ENCODE measurements at regions of chr4 and their contacts with region 1.

Region 1: GRCh38 chr4:185471235-185472102 is at the start of gene CCDC110:
- DNase-seq: peak; percentile 86 to 98 (median 92)
- ATAC-seq: peak; percentile 92
- H3K4me3 ChIP-seq: peak within 1 kb of the TSS; percentile 73
- H3K4me3 Mint-ChIP-seq: peak within 1 kb of the TSS; percentile 93
- H3K27ac ChIP-seq: peak within 1 kb of the TSS in 1 of 2 donors; percentile 31
- H3K27ac Mint-ChIP-seq: peak within 1 kb of the TSS; percentile 63
- H3K4me1 ChIP-seq: peaks cover 20% of the 10 kb centered on the region
- H3K4me1 Mint-ChIP-seq: peaks cover 18% of the 10 kb centered on the region
- H3K27me3 ChIP-seq: peaks cover 0 to 10% of the 10 kb centered on the region in 2 experiments
- H3K27me3 Mint-ChIP-seq: peaks cover 5% of the 10 kb centered on the region
- CTCF ChIP-seq: peak; percentile 48
- total RNA-seq, gene CCDC110: 0.34 to 0.36 TPM

Region 2: DNA sequence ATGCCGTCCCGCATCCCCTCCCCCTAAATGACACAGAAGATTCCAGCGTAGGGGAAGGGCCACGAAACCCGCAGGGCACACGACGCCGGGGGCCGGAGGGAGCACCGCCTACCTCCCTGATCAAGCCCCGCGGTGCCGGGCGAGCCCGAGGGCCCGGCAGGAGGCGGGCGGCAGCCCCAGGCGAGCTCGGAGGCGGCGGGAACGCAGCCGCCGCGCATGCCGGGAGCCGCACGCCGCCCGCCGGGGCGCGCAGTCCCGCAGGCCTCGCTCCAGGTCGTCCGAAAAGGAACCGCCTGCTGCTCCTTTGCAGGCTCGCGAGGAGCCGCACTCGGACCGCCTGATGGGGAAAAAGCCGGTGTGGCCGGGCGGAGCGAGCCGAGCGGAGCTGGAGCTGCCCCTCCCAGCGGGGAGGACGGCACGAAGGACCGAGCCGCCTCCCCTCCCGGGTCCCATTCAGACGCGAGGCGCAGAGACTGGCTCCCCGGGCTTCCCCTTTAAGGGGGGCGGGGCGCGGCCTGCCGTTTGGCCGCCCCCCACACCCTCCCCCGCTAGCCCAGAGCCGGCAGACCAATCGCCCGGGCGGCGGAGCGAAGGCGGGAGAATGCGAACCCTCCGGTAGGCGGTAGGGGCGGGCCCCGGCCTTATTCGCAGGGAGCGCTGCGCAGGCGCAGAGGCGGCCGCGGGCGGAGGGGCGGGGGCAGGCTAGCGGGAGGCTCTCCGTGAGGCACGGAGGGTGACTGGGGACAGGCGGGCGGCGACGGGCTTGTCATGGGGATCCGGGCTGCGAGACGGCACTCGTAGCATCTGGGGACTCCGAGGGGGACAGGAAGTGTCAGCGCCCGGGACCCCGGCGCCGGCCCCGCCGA is 1967.2 kb before region 1 on chr4:
- CTCF ChIA-PET with region 1: no interaction called
- POLR2A ChIA-PET with region 1: no interaction called
- intact Hi-C with region 1: loop called in 1 of 2 experiments (anchors 5 kb)
- DNase-seq: peak; percentile 98 to 100 (median 99)
- ATAC-seq: peak; percentile 77
- H3K4me3 ChIP-seq: peak overlapping the region; percentile 90
- H3K4me3 Mint-ChIP-seq: peak overlapping the region; percentile 100
- H3K27ac ChIP-seq: peak overlapping the region; percentile 87 to 94
- H3K27ac Mint-ChIP-seq: peak overlapping the region; percentile 97
- H3K4me1 ChIP-seq: peaks cover 14% of the 10 kb centered on the region
- H3K4me1 Mint-ChIP-seq: peaks cover 46% of the 10 kb centered on the region
- H3K27me3 ChIP-seq: no peaks in the 10 kb centered on the region
- H3K27me3 Mint-ChIP-seq: no peaks in the 10 kb centered on the region
- CTCF ChIP-seq: peak; percentile 8

Region 3: GRCh38 chr4:184825896-184826690 is 645.4 kb before region 1 on chr4 and contains the start of gene ACSL1:
- CTCF ChIA-PET with region 1: no interaction called
- POLR2A ChIA-PET with region 1: no interaction called
- intact Hi-C with region 1: loop called in 1 of 2 experiments (anchors 5 kb)
- DNase-seq: peak; percentile 58 to 90 (median 72)
- ATAC-seq: peak; percentile 85
- H3K4me3 ChIP-seq: peak within 1 kb of the TSS; percentile 59
- H3K4me3 Mint-ChIP-seq: peak within 1 kb of the TSS; percentile 97
- H3K27ac ChIP-seq: peak within 1 kb of the TSS in 1 of 2 donors; percentile 31
- H3K27ac Mint-ChIP-seq: peak within 1 kb of the TSS; percentile 92
- H3K4me1 ChIP-seq: peaks cover 23% of the 10 kb centered on the region
- H3K4me1 Mint-ChIP-seq: peaks cover 40% of the 10 kb centered on the region
- H3K27me3 ChIP-seq: no peaks in the 10 kb centered on the region
- H3K27me3 Mint-ChIP-seq: no peaks in the 10 kb centered on the region
- CTCF ChIP-seq: no peak
- total RNA-seq, gene ACSL1: 12.4 to 12.5 TPM

Region 4: GRCh38 chr4:185395956-185396723 is 75.3 kb before region 1 on chr4:
- CTCF ChIA-PET with region 1: no interaction called
- POLR2A ChIA-PET with region 1: no interaction called
- intact Hi-C with region 1: loop called (anchors 2 kb)
- DNase-seq: peak; percentile 88 to 98 (median 96)
- ATAC-seq: peak; percentile 91
- H3K4me3 ChIP-seq: peak overlapping the region; percentile 88
- H3K4me3 Mint-ChIP-seq: peak overlapping the region; percentile 92
- H3K27ac ChIP-seq: peak overlapping the region; percentile 93 to 97
- H3K27ac Mint-ChIP-seq: peak overlapping the region; percentile 92
- H3K4me1 ChIP-seq: peaks cover 11% of the 10 kb centered on the region
- H3K4me1 Mint-ChIP-seq: peaks cover 17% of the 10 kb centered on the region
- H3K27me3 ChIP-seq: no peaks in the 10 kb centered on the region
- H3K27me3 Mint-ChIP-seq: no peaks in the 10 kb centered on the region
- CTCF ChIP-seq: no peak

Region 5: DNA sequence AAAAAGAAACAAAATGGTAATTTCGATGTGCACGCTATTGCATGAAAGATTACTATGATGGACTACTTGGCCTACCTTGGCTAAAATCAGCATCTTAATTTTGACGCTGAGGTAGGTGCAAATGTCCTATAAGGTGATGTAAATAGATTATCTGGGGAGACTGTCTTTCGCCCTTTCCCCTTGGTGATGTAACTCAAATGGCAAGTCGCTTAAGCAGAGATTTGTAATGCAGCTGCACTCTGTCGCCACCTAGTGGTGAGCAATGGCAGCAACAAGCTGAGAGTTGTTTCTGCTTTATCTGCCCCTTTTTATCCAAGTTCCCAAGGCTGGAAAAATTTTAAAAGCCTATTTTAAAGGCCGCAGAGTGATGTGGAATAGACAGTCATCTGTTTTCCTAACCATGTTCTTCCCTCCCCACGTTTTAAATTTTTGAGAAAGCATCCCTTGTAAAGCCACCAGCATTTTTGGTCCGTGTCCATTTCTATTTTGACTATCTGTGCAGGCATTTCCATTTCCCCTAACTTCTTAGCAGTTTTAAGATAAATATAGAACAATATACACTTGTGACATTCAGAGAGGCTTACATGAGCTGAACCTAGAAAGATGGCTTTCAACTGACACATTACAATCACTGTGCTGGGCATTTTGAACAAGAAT is 126.2 kb after region 1 on chr4:
- CTCF ChIA-PET with region 1: interaction called, 6 read pairs
- POLR2A ChIA-PET with region 1: interaction called, 3 read pairs
- intact Hi-C with region 1: loop called (anchors 1 to 2 kb)
- DNase-seq: peak; percentile 50 to 82 (median 62)
- ATAC-seq: peak; percentile 74
- H3K4me3 ChIP-seq: no peak overlapping the region
- H3K4me3 Mint-ChIP-seq: no peak overlapping the region
- H3K27ac ChIP-seq: no peak overlapping the region
- H3K27ac Mint-ChIP-seq: no peak overlapping the region
- H3K4me1 ChIP-seq: no peaks in the 10 kb centered on the region
- H3K4me1 Mint-ChIP-seq: no peaks in the 10 kb centered on the region
- H3K27me3 ChIP-seq: peaks cover 0 to 4% of the 10 kb centered on the region in 2 experiments
- H3K27me3 Mint-ChIP-seq: peaks cover 33% of the 10 kb centered on the region
- CTCF ChIP-seq: peak; percentile 99

Measured in CD4-positive, alpha-beta T cell (primary cell).